ENCODE measurements at regions of chr17 and their contacts with region 1.

Region 1: GRCh38 chr17:78140169-78140976 is 5.8 kb upstream of the C17orf99 start:
- DNase-seq: peak; percentile 99
- ATAC-seq: peak; percentile 91
- H3K4me3 Mint-ChIP-seq: peak overlapping the region; percentile 34
- H3K27ac Mint-ChIP-seq: peak overlapping the region; percentile 75
- H3K4me1 Mint-ChIP-seq: peaks cover 62% of the 10 kb centered on the region
- H3K27me3 Mint-ChIP-seq: no peaks in the 10 kb centered on the region

Region 2: GRCh38 chr17:78128551-78129350 is 11.6 kb before region 1 on chr17 and contains the start of gene TMC6:
- CTCF ChIA-PET with region 1: interaction called, 13 read pairs
- POLR2A ChIA-PET with region 1: interaction called, 3 read pairs
- intact Hi-C with region 1: loop called (anchors 1 kb)
- DNase-seq: peak; percentile 87
- ATAC-seq: peak; percentile 31
- H3K4me3 Mint-ChIP-seq: peak within 1 kb of the TSS; percentile 94
- H3K27ac Mint-ChIP-seq: peak within 1 kb of the TSS; percentile 96
- H3K4me1 Mint-ChIP-seq: peaks cover 52% of the 10 kb centered on the region
- H3K27me3 Mint-ChIP-seq: no peaks in the 10 kb centered on the region
- total RNA-seq, gene TMC6: 138 to 145 TPM

Region 3: DNA sequence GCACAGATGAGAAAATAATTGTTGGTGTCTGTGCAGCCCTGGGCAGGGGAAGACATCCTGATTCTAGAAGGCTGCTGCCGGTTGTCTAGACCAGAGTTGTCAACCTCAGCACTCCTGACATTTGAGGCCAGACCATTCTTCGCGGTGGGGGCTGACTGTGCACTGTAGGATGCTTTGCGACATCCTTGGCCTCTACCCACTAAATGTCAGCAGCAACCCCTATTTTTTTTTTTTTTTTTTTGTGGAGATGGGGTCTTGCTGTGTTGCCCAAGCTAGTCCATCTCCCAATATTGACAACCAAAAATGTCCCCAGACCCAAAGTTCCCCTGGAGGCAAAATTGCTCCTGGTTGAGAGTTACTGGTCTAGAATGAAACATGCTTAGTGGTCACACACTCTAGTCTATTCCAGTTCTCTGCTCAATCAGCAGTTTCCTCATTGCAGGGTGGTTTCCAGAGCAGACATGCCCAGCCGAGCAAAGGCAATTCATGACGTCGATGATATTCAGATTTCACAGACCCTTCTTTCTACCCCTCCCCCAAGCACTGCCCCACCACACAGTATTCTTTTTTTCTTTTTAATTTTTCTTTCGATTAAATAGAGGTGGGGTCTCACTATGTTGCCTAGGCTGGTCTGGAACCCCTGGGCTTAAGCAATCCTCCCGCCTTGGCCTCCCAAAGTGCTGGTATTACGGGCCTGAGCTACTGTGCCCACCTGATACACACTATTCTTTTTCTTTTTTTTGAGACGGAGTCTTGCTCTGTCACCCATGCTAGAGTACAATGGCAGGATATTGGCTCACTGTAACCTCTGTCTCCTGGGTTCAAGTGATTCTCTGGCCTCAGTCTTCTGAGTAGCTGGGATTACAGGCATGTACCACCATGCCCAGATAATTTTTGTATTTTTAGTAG is 14.8 kb after region 1 on chr17:
- CTCF ChIA-PET with region 1: interaction called, 4 read pairs
- POLR2A ChIA-PET with region 1: interaction called, 11 read pairs
- intact Hi-C with region 1: no loop called
- DNase-seq: no peak
- ATAC-seq: peak; percentile 63
- H3K4me3 Mint-ChIP-seq: no peak overlapping the region
- H3K27ac Mint-ChIP-seq: no peak overlapping the region
- H3K4me1 Mint-ChIP-seq: peaks cover 8% of the 10 kb centered on the region
- H3K27me3 Mint-ChIP-seq: no peaks in the 10 kb centered on the region

Region 4: GRCh38 chr17:78168242-78168902 is 28.0 kb after region 1 on chr17 and contains the start of gene SYNGR2:
- CTCF ChIA-PET with region 1: interaction called, 4 read pairs
- POLR2A ChIA-PET with region 1: no interaction called
- intact Hi-C with region 1: loop called (anchors 1 to 2 kb)
- DNase-seq: peak; percentile 93
- ATAC-seq: peak; percentile 79
- H3K4me3 Mint-ChIP-seq: peak within 1 kb of the TSS; percentile 71
- H3K27ac Mint-ChIP-seq: peak within 1 kb of the TSS; percentile 69
- H3K4me1 Mint-ChIP-seq: peaks cover 35% of the 10 kb centered on the region
- H3K27me3 Mint-ChIP-seq: no peaks in the 10 kb centered on the region
- total RNA-seq, gene SYNGR2: 79.1 to 89.2 TPM

Region 5: DNA sequence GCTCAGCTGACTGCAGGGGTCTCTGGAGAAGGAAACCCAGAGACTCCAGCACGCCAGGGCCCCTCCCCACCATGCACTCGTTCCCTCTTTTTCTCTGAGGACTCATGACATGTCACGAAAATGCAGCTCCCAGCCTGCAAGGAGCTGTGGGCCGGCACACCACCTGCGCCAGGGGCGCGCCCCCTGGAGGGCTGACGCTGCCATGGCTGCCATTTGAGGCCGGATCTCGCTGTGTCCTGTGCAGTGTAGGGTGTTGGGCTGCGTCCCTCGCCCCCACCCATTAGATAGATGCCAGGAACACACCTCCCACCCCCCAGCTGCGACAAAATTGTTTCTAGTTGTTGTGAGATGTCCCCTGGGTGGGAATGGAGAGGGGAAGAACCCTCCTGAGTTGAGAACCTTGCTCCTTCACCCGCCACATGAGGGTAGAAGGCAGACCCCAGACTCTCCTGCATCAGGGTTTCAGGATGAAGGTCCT is 36.2 kb after region 1 on chr17:
- CTCF ChIA-PET with region 1: interaction called, 11 read pairs
- POLR2A ChIA-PET with region 1: no interaction called
- intact Hi-C with region 1: no loop called
- DNase-seq: peak; percentile 86
- ATAC-seq: peak; percentile 77
- H3K4me3 Mint-ChIP-seq: no peak overlapping the region
- H3K27ac Mint-ChIP-seq: no peak overlapping the region
- H3K4me1 Mint-ChIP-seq: peaks cover 47% of the 10 kb centered on the region
- H3K27me3 Mint-ChIP-seq: no peaks in the 10 kb centered on the region

Region 6: DNA sequence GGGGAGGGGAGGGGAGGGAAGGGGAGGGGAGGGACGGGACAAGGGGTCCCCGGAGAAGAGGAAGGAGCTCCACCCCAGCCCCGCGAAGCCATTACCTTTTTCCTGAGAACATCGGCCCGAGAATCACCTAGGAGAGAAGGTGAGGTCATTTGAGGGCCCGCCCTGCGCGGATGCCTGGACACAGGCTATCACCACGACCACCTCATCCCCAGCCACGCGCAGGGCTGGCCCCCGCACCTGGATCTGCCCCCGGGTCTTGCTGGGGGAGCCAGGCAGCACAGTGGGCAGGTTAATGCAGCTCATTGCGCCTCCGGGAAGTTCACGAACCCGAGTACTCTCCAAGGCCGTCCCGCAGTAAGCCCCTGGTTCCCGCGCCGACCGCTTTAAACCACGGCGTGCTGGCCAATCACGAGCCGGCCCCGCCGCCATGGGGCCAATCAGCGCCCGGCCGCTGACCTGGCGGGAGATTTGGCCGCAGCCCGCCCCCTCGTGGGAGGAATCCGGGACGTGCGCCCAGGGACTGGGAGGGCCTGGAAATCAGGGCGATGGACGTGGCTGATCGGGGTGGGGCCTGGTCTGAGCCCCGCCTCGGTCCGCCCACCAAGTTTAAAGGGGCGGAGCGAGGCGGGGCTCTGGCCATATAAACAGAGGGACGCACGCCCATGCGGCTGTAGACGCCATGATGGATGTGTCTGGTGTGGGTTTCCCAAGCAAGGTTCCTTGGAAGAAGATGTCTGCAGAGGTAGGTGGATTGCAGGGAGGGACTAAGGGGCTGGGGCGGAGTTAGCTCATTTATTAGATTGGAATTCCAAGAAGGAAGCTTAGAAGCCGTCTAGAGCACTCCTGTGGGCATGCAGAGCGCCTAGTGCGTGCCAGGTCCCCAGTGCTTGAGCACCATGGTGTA is 46.6 kb after region 1 on chr17 and contains the starts of genes AFMID and TK1:
- CTCF ChIA-PET with region 1: interaction called, 4 read pairs
- POLR2A ChIA-PET with region 1: no interaction called
- intact Hi-C with region 1: loop called (anchors 1 kb)
- DNase-seq: peak; percentile 98
- ATAC-seq: peak; percentile 96
- H3K4me3 Mint-ChIP-seq: peak within 1 kb of the TSS; percentile 78
- H3K27ac Mint-ChIP-seq: peak within 1 kb of the TSS; percentile 73
- H3K4me1 Mint-ChIP-seq: peaks cover 26% of the 10 kb centered on the region
- H3K27me3 Mint-ChIP-seq: no peaks in the 10 kb centered on the region
- total RNA-seq, gene AFMID: 26.3 to 26.7 TPM
- total RNA-seq, gene TK1: 157 to 195 TPM

Region 7: DNA sequence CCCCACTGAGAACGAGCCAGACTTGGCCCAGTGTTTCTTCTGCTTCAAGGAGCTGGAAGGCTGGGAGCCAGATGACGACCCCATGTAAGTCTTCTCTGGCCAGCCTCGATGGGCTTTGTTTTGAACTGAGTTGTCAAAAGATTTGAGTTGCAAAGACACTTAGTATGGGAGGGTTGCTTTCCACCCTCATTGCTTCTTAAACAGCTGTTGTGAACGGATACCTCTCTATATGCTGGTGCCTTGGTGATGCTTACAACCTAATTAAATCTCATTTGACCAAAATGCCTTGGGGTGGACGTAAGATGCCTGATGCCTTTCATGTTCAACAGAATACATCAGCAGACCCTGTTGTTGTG is 74.3 kb after region 1 on chr17:
- CTCF ChIA-PET with region 1: no interaction called
- POLR2A ChIA-PET with region 1: no interaction called
- intact Hi-C with region 1: loop called in 1 of 2 experiments (anchors 1 kb)
- DNase-seq: no peak
- ATAC-seq: no peak
- H3K4me3 Mint-ChIP-seq: peak overlapping the region; percentile 89
- H3K27ac Mint-ChIP-seq: peak overlapping the region; percentile 78
- H3K4me1 Mint-ChIP-seq: peaks cover 5% of the 10 kb centered on the region
- H3K27me3 Mint-ChIP-seq: no peaks in the 10 kb centered on the region